Breast epithelium (tissue), 4 donors: ENCODE measurements at regions of chr7 and their contacts with region 1.

Region 1: DNA sequence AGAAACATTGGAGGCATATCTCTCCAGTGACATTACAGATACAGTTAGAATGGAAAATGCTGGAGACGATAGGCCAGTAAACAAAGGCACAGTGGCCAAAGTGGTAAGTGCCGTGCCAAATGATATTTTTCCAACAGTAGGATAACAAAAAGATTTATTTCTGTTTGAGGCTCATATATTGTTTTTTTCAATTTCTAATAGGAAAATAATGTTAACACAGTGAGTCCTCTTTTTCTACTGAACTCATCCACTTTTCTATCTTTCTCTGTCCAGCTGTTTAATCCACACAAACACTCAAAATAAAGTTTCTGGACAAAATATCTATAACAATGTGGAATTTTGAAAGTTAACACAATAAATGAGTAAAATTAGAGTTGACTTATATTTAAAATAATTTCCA is 201.3 kb downstream of the SEMA3E start:
- DNase-seq: no peak
- H3K4me3 ChIP-seq: no peak overlapping the region
- H3K27ac ChIP-seq: no peak overlapping the region
- H3K4me1 ChIP-seq: no peaks in the 10 kb centered on the region
- H3K27me3 ChIP-seq: no peaks in the 10 kb centered on the region
- CTCF ChIP-seq: no peak
- POLR2A ChIP-seq: no peak

Region 2: GRCh38 chr7:83517035-83517700 is 69.5 kb after region 1 on chr7:
- intact Hi-C with region 1: loop called (anchors 10 kb)
- DNase-seq: no peak
- H3K4me3 ChIP-seq: no peak overlapping the region
- H3K27ac ChIP-seq: no peak overlapping the region
- H3K4me1 ChIP-seq: no peaks in the 10 kb centered on the region
- H3K27me3 ChIP-seq: no peaks in the 10 kb centered on the region
- CTCF ChIP-seq: no peak
- POLR2A ChIP-seq: no peak

Region 3: GRCh38 chr7:83947260-83947659 is 499.6 kb after region 1 on chr7:
- intact Hi-C with region 1: no loop called
- DNase-seq: no peak
- H3K4me3 ChIP-seq: no peak overlapping the region
- H3K27ac ChIP-seq: no peak overlapping the region
- H3K4me1 ChIP-seq: no peaks in the 10 kb centered on the region
- H3K27me3 ChIP-seq: no peaks in the 10 kb centered on the region
- CTCF ChIP-seq: no peak
- POLR2A ChIP-seq: no peak

Region 4: GRCh38 chr7:84188786-84189405 is 741.2 kb after region 1 on chr7:
- intact Hi-C with region 1: no loop called
- DNase-seq: no peak
- H3K4me3 ChIP-seq: no peak overlapping the region
- H3K27ac ChIP-seq: no peak overlapping the region
- H3K4me1 ChIP-seq: no peaks in the 10 kb centered on the region
- H3K27me3 ChIP-seq: no peaks in the 10 kb centered on the region
- CTCF ChIP-seq: no peak
- POLR2A ChIP-seq: no peak